CD8-positive, alpha-beta T cell (primary cell): ENCODE measurements at regions of chr6 and their contacts with region 1.

Region 1: GRCh38 chr6:53725791-53726431 is 60.4 kb upstream of the KLHL31 start:
- DNase-seq: peak; percentile 47 to 84 (median 78)
- ATAC-seq: peak; percentile 95
- H3K4me3 ChIP-seq: no peak overlapping the region
- H3K4me3 Mint-ChIP-seq: no peak overlapping the region
- H3K27ac ChIP-seq: no peak overlapping the region
- H3K27ac Mint-ChIP-seq: no peak overlapping the region
- H3K4me1 ChIP-seq: peaks cover 3% of the 10 kb centered on the region
- H3K4me1 Mint-ChIP-seq: peaks cover 6% of the 10 kb centered on the region
- H3K27me3 ChIP-seq: peaks cover 0 to 3% of the 10 kb centered on the region in 2 experiments
- H3K27me3 Mint-ChIP-seq: peaks cover 19% of the 10 kb centered on the region
- CTCF ChIP-seq: peak; percentile 88

Region 2: GRCh38 chr6:53492860-53493634 is 232.9 kb before region 1 on chr6:
- CTCF ChIA-PET with region 1: interaction called, 253 read pairs
- POLR2A ChIA-PET with region 1: interaction called, 4 read pairs
- intact Hi-C with region 1: loop called (anchors 1 kb)
- DNase-seq: peak in 2 of 9 experiments; percentile 59 to 67
- ATAC-seq: peak; percentile 40
- H3K4me3 ChIP-seq: no peak overlapping the region
- H3K4me3 Mint-ChIP-seq: no peak overlapping the region
- H3K27ac ChIP-seq: no peak overlapping the region
- H3K27ac Mint-ChIP-seq: no peak overlapping the region
- H3K4me1 ChIP-seq: no peaks in the 10 kb centered on the region
- H3K4me1 Mint-ChIP-seq: no peaks in the 10 kb centered on the region
- H3K27me3 ChIP-seq: no peaks in the 10 kb centered on the region
- H3K27me3 Mint-ChIP-seq: peaks cover 8% of the 10 kb centered on the region
- CTCF ChIP-seq: peak; percentile 93

Region 3: DNA sequence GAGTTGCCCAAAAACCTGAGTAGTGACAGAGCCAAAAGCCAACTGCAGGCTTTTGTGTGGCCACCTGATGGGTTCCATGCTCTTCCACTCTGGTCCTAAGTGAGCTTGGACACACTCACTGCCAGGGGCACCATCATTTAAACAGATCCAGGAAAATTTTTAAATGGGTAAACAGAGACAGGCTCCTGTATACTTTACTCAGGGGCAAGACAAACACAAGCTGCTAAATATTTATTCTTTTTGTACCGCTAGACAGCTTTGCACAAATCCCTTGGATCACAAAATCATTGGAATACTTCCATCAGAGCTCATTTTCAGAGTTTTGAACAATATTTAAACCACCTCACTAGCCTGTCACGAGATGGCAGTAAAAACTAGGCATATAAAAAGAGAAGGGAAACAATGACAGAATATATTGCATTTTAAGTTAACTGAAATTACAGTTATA is 212.4 kb before region 1 on chr6:
- CTCF ChIA-PET with region 1: interaction called, 16 read pairs
- POLR2A ChIA-PET with region 1: no interaction called
- intact Hi-C with region 1: no loop called
- DNase-seq: no peak
- ATAC-seq: no peak
- H3K4me3 ChIP-seq: no peak overlapping the region
- H3K4me3 Mint-ChIP-seq: no peak overlapping the region
- H3K27ac ChIP-seq: no peak overlapping the region
- H3K27ac Mint-ChIP-seq: no peak overlapping the region
- H3K4me1 ChIP-seq: no peaks in the 10 kb centered on the region
- H3K4me1 Mint-ChIP-seq: no peaks in the 10 kb centered on the region
- H3K27me3 ChIP-seq: no peaks in the 10 kb centered on the region
- H3K27me3 Mint-ChIP-seq: no peaks in the 10 kb centered on the region
- CTCF ChIP-seq: no peak

Region 4: GRCh38 chr6:53651764-53652401 is 74.0 kb before region 1 on chr6:
- CTCF ChIA-PET with region 1: interaction called, 52 read pairs
- POLR2A ChIA-PET with region 1: interaction called, 3 read pairs
- intact Hi-C with region 1: loop called (anchors 1 to 5 kb)
- DNase-seq: peak; percentile 57 to 91 (median 79)
- ATAC-seq: peak; percentile 86
- H3K4me3 ChIP-seq: peak overlapping the region; percentile 67 to 81
- H3K4me3 Mint-ChIP-seq: peak overlapping the region; percentile 91
- H3K27ac ChIP-seq: peak overlapping the region; percentile 54 to 65
- H3K27ac Mint-ChIP-seq: peak overlapping the region; percentile 89
- H3K4me1 ChIP-seq: peaks cover 32% of the 10 kb centered on the region
- H3K4me1 Mint-ChIP-seq: peaks cover 32% of the 10 kb centered on the region
- H3K27me3 ChIP-seq: no peaks in the 10 kb centered on the region
- H3K27me3 Mint-ChIP-seq: no peaks in the 10 kb centered on the region
- CTCF ChIP-seq: no peak

Region 5: GRCh38 chr6:53707108-53707897 is 18.6 kb before region 1 on chr6:
- CTCF ChIA-PET with region 1: interaction called, 109 read pairs
- POLR2A ChIA-PET with region 1: no interaction called
- intact Hi-C with region 1: no loop called
- DNase-seq: no peak
- ATAC-seq: no peak
- H3K4me3 ChIP-seq: no peak overlapping the region
- H3K4me3 Mint-ChIP-seq: no peak overlapping the region
- H3K27ac ChIP-seq: no peak overlapping the region
- H3K27ac Mint-ChIP-seq: no peak overlapping the region
- H3K4me1 ChIP-seq: no peaks in the 10 kb centered on the region
- H3K4me1 Mint-ChIP-seq: no peaks in the 10 kb centered on the region
- H3K27me3 ChIP-seq: peaks cover 0 to 4% of the 10 kb centered on the region in 2 experiments
- H3K27me3 Mint-ChIP-seq: peaks cover 13% of the 10 kb centered on the region
- CTCF ChIP-seq: no peak

Region 6: DNA sequence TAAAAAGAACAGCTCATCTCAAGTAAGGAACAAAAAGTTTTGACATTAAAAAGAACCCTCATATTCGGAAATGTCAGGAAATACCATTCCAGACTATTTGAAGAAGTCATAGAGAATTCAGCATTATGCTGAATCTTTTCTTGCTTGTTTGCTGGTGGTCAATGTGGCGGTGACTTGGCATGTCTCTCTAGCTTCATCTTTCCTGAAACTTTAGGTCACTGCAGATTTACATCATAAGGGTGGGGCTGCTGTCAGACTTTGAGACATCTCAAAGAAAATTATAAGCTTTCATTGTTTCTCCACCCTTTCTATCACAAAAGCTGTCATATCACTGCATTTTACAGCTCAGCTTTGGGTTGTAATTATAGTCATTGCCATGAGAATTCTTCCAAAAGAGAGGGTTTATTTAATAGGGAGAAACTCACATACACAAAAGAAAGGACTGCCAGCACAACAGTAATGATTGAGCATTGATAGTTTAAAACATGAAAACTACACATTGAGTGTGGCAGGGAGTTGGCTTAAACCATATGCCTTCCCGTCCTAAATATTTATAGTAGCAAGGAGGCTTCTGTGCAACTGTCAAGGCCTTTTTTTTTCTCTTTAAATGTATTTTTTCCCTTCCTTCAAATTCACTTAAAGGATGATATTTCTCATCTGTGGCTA is 24.2 kb after region 1 on chr6:
- CTCF ChIA-PET with region 1: interaction called, 13 read pairs
- POLR2A ChIA-PET with region 1: no interaction called
- intact Hi-C with region 1: no loop called
- DNase-seq: no peak
- ATAC-seq: no peak
- H3K4me3 ChIP-seq: no peak overlapping the region
- H3K4me3 Mint-ChIP-seq: no peak overlapping the region
- H3K27ac ChIP-seq: no peak overlapping the region
- H3K27ac Mint-ChIP-seq: no peak overlapping the region
- H3K4me1 ChIP-seq: no peaks in the 10 kb centered on the region
- H3K4me1 Mint-ChIP-seq: no peaks in the 10 kb centered on the region
- H3K27me3 ChIP-seq: no peaks in the 10 kb centered on the region
- H3K27me3 Mint-ChIP-seq: no peaks in the 10 kb centered on the region
- CTCF ChIP-seq: no peak

Region 7: GRCh38 chr6:53992522-53992921 is 266.6 kb after region 1 on chr6:
- CTCF ChIA-PET with region 1: no interaction called
- POLR2A ChIA-PET with region 1: no interaction called
- intact Hi-C with region 1: no loop called
- DNase-seq: no peak
- ATAC-seq: no peak
- H3K4me3 ChIP-seq: no peak overlapping the region
- H3K4me3 Mint-ChIP-seq: no peak overlapping the region
- H3K27ac ChIP-seq: no peak overlapping the region
- H3K27ac Mint-ChIP-seq: no peak overlapping the region
- H3K4me1 ChIP-seq: no peaks in the 10 kb centered on the region
- H3K4me1 Mint-ChIP-seq: no peaks in the 10 kb centered on the region
- H3K27me3 ChIP-seq: no peaks in the 10 kb centered on the region
- H3K27me3 Mint-ChIP-seq: peaks cover 2% of the 10 kb centered on the region
- CTCF ChIP-seq: no peak